ENCODE measurements at regions of chr6 and their contacts with region 1.

Region 1: GRCh38 chr6:35240840-35241801 is 18.4 kb upstream of the ZNF76 start:
- DNase-seq: peak; percentile 34 to 78 (median 62)
- ATAC-seq: peak; percentile 89
- H3K4me3 ChIP-seq: no peak overlapping the region
- H3K4me3 Mint-ChIP-seq: no peak overlapping the region
- H3K27ac ChIP-seq: no peak overlapping the region
- H3K27ac Mint-ChIP-seq: peak overlapping the region in 2 of 9 donors; percentile 10 to 65
- H3K4me1 ChIP-seq: no peaks in the 10 kb centered on the region
- H3K4me1 Mint-ChIP-seq: peaks cover 3 to 10% (median 4%) of the 10 kb centered on the region in 7 donors
- H3K27me3 ChIP-seq: no peaks in the 10 kb centered on the region
- H3K27me3 Mint-ChIP-seq: peaks cover 0 to 6% (median 0%) of the 10 kb centered on the region in 5 donors

Region 2: DNA sequence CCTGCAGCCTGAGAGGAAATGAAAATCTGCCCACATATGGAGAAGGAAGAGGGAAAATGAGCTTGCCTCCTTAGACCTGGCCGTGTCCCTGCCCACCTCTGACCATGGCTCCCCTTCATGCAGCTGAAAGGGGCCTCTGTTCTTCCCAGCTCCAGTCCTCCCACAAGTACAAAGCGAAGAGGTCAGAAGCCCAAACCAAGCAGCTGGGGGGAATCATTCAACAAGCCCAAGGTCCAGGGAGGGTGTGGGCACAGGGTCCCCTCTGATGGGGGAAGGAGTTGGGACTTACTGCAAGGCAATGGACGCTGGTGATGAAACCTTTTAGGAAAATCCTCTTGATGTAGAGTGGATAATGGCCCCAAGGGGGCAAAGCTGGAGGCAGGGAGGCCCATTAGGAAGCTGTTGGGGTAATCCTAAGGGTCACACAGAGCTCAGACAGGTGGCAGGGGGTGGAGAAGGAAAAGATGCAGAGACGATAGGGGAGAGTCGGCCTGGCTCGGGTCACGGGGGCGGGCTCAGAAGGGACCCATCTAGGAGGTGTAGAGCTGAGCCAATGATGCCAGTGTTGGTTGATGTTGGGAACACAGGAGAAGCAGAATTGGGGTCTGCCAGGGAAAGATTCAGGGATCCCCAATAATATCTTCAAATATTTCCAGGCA is 1079.1 kb before region 1 on chr6:
- CTCF ChIA-PET with region 1: no interaction called
- POLR2A ChIA-PET with region 1: no interaction called
- intact Hi-C with region 1: loop called in 1 of 2 experiments (anchors 10 kb)
- DNase-seq: no peak
- ATAC-seq: no peak
- H3K4me3 ChIP-seq: no peak overlapping the region
- H3K4me3 Mint-ChIP-seq: no peak overlapping the region
- H3K27ac ChIP-seq: no peak overlapping the region
- H3K27ac Mint-ChIP-seq: peak overlapping the region in 1 of 9 donors; percentile 44
- H3K4me1 ChIP-seq: no peaks in the 10 kb centered on the region
- H3K4me1 Mint-ChIP-seq: peaks cover 0 to 8% (median 0%) of the 10 kb centered on the region in 7 donors
- H3K27me3 ChIP-seq: no peaks in the 10 kb centered on the region
- H3K27me3 Mint-ChIP-seq: peaks cover 0 to 32% (median 0%) of the 10 kb centered on the region in 5 donors

Region 3: GRCh38 chr6:34459899-34460593 is 781.1 kb before region 1 on chr6:
- CTCF ChIA-PET with region 1: interaction called, 6 read pairs
- POLR2A ChIA-PET with region 1: no interaction called
- intact Hi-C with region 1: loop called in 1 of 2 experiments (anchors 1 kb)
- DNase-seq: peak in 8 of 9 donors; percentile 23 to 55 (median 50)
- ATAC-seq: peak; percentile 82
- H3K4me3 ChIP-seq: no peak overlapping the region
- H3K4me3 Mint-ChIP-seq: no peak overlapping the region
- H3K27ac ChIP-seq: no peak overlapping the region
- H3K27ac Mint-ChIP-seq: no peak overlapping the region
- H3K4me1 ChIP-seq: no peaks in the 10 kb centered on the region
- H3K4me1 Mint-ChIP-seq: peaks cover 0 to 2% (median under 1%) of the 10 kb centered on the region in 7 donors
- H3K27me3 ChIP-seq: no peaks in the 10 kb centered on the region
- H3K27me3 Mint-ChIP-seq: peaks cover 4 to 24% (median 17%) of the 10 kb centered on the region in 5 donors

Region 4: GRCh38 chr6:34986845-34987246 is 254.3 kb before region 1 on chr6:
- CTCF ChIA-PET with region 1: interaction called, 4 read pairs
- POLR2A ChIA-PET with region 1: no interaction called
- intact Hi-C with region 1: loop called in 1 of 2 experiments (anchors 1 kb)
- DNase-seq: peak; percentile 23 to 72 (median 59)
- ATAC-seq: peak; percentile 72
- H3K4me3 ChIP-seq: no peak overlapping the region
- H3K4me3 Mint-ChIP-seq: no peak overlapping the region
- H3K27ac ChIP-seq: no peak overlapping the region
- H3K27ac Mint-ChIP-seq: no peak overlapping the region
- H3K4me1 ChIP-seq: no peaks in the 10 kb centered on the region
- H3K4me1 Mint-ChIP-seq: no peaks in the 10 kb centered on the region
- H3K27me3 ChIP-seq: no peaks in the 10 kb centered on the region
- H3K27me3 Mint-ChIP-seq: no peaks in the 10 kb centered on the region

Region 5: GRCh38 chr6:35058865-35059522 is 182.1 kb before region 1 on chr6:
- CTCF ChIA-PET with region 1: no interaction called
- POLR2A ChIA-PET with region 1: no interaction called
- intact Hi-C with region 1: no loop called
- DNase-seq: peak in 1 of 9 donors; percentile 9
- ATAC-seq: no peak
- H3K4me3 ChIP-seq: no peak overlapping the region
- H3K4me3 Mint-ChIP-seq: peak overlapping the region in 3 of 10 donors; percentile 6 to 60 (median 38)
- H3K27ac ChIP-seq: no peak overlapping the region
- H3K27ac Mint-ChIP-seq: peak overlapping the region in 5 of 9 donors; percentile 5 to 59 (median 38)
- H3K4me1 ChIP-seq: peaks cover 0 to 6% of the 10 kb centered on the region in 2 donors
- H3K4me1 Mint-ChIP-seq: peaks cover 0 to 18% (median 4%) of the 10 kb centered on the region in 7 donors
- H3K27me3 ChIP-seq: no peaks in the 10 kb centered on the region
- H3K27me3 Mint-ChIP-seq: no peaks in the 10 kb centered on the region

Region 6: DNA sequence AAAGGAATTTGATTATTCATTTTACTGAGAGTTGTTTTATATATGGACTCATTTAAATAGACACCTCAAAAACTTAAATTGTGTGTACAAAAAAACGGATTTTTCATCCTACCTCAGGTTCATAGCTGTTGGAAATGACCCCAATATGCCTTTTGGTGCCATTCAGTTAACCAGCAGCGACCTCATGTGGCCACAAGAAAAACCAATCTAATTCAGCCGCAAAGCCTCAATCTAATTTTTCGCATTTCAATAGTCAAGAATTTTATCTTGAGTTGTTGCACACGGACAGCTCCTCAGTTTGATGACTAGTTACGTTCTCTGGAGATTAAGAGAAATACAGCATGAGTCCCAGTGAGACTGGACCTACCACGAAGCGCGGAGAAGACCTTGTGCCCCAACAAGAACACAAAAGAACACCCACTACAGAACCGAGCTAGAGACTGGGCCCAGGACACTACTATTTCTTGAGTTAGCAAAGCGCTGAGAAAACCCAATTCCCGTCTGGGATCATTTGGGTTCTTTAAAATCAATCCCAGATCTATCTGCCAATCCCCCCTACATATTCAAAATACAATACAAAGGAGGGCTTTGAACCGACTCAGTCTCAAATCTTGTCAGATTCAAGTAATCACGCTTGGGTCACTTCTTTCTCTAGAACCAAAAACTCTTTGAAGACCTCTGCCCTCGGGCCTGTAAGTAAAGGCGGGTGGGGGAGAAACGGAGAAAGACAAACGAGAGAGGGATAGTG is 101.0 kb before region 1 on chr6:
- CTCF ChIA-PET with region 1: no interaction called
- POLR2A ChIA-PET with region 1: no interaction called
- intact Hi-C with region 1: loop called (anchors 2 to 5 kb)
- DNase-seq: peak in 6 of 9 donors; percentile 26 to 50 (median 42)
- ATAC-seq: peak; percentile 46
- H3K4me3 ChIP-seq: no peak overlapping the region
- H3K4me3 Mint-ChIP-seq: peak overlapping the region in 9 of 10 donors; percentile 1 to 76 (median 46)
- H3K27ac ChIP-seq: no peak overlapping the region
- H3K27ac Mint-ChIP-seq: peak overlapping the region in 2 of 9 donors; percentile 38 to 44
- H3K4me1 ChIP-seq: no peaks in the 10 kb centered on the region
- H3K4me1 Mint-ChIP-seq: peaks cover 13 to 22% (median 16%) of the 10 kb centered on the region in 7 donors
- H3K27me3 ChIP-seq: no peaks in the 10 kb centered on the region
- H3K27me3 Mint-ChIP-seq: peaks cover 8 to 35% (median 13%) of the 10 kb centered on the region in 5 donors

Region 7: DNA sequence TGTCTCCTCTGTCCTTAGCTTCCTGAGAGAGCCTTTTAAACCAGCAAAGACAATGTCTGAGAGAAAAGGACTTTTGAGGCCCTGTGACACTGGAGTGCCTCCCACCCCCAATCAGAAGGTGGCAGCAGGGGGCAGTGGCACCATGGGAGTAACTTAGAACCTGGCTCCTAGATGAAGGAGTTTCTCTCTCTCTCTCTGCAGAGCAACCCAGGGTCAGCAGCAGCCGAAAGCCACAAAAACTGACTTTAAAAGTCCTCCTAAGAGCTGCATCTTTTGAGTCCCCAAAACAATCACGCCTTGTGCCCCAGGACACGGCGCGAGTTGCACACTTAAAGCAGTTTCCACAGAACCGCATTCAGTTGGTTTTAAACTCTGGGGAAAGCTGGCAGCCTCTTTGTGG is 94.7 kb before region 1 on chr6:
- CTCF ChIA-PET with region 1: no interaction called
- POLR2A ChIA-PET with region 1: no interaction called
- intact Hi-C with region 1: loop called (anchors 2 to 5 kb)
- DNase-seq: peak in 1 of 9 donors; percentile 37
- ATAC-seq: no peak
- H3K4me3 ChIP-seq: no peak overlapping the region
- H3K4me3 Mint-ChIP-seq: no peak overlapping the region
- H3K27ac ChIP-seq: no peak overlapping the region
- H3K27ac Mint-ChIP-seq: no peak overlapping the region
- H3K4me1 ChIP-seq: no peaks in the 10 kb centered on the region
- H3K4me1 Mint-ChIP-seq: peaks cover 3 to 37% (median 5%) of the 10 kb centered on the region in 7 donors
- H3K27me3 ChIP-seq: no peaks in the 10 kb centered on the region
- H3K27me3 Mint-ChIP-seq: peaks cover 0 to 9% (median 5%) of the 10 kb centered on the region in 5 donors

Region 8: DNA sequence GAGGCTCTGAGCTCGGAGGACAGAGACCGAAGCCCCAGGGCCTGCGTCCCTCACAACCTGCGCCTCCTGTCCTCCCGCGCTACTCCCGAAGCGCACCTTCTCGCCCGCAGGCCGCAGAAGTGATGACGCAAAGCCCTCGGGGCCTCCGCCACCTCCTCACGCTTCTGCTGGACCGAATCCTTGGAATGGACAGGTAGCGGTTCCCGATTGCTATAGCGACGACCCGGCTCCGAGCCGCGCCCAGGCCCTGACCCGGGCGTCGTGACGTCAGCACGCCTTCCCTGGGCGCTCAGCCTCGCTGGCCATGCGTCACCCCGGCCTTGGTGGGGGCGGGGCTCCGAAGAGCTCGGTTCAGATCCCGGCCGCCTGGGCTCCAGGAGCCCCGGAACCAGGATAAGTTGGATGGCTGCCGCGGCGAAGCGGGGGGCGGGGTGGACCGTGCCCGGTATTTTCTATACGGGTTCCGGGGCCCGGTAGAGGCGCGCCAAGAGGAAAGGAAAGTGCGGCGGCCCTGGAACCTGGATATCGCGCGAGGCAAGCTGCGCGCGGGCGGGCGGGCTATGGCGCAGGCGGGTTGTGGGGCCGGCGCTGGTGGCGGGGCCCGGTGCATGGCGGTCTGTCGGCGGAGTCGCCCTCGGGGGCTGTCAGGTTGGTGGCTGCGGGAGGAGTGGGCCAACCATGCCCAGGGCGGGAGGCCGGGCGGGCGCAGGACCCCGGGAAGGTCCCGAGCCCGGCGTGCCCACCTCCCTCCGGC is 18.2 kb after region 1 on chr6 and contains the start of gene ZNF76:
- CTCF ChIA-PET with region 1: interaction called, 4 read pairs
- POLR2A ChIA-PET with region 1: interaction called, 5 read pairs
- intact Hi-C with region 1: loop called in 1 of 2 experiments (anchors 1 kb)
- DNase-seq: peak; percentile 89 to 93 (median 92)
- ATAC-seq: peak; percentile 88
- H3K4me3 ChIP-seq: peak within 1 kb of the TSS; percentile 65
- H3K4me3 Mint-ChIP-seq: peak within 1 kb of the TSS; percentile 85 to 99 (median 97)
- H3K27ac ChIP-seq: peak within 1 kb of the TSS; percentile 95
- H3K27ac Mint-ChIP-seq: peak within 1 kb of the TSS; percentile 89 to 99 (median 97)
- H3K4me1 ChIP-seq: peaks cover 15 to 17% of the 10 kb centered on the region in 2 donors
- H3K4me1 Mint-ChIP-seq: peaks cover 37 to 64% (median 50%) of the 10 kb centered on the region in 7 donors
- H3K27me3 ChIP-seq: no peaks in the 10 kb centered on the region
- H3K27me3 Mint-ChIP-seq: no peaks in the 10 kb centered on the region
- total RNA-seq, gene ZNF76: 44.4 to 110 (median 77.2) TPM

Measured in naive thymus-derived CD4-positive, alpha-beta T cell (primary cell).